Testis (tissue), 5 donors: ENCODE measurements at regions of chr13 and their contacts with region 1.

Region 1: GRCh38 chr13:51452361-51453206 is at the start of gene INTS6:
- DNase-seq: peak; percentile 100
- H3K4me3 ChIP-seq: peak within 1 kb of the TSS; percentile 91 to 98
- H3K27ac ChIP-seq: peak within 1 kb of the TSS; percentile 99 to 100
- H3K4me1 ChIP-seq: peaks cover 13% of the 10 kb centered on the region
- H3K27me3 ChIP-seq: no peaks in the 10 kb centered on the region
- CTCF ChIP-seq: no peak
- POLR2A ChIP-seq: peak; percentile 99
- total RNA-seq, gene INTS6: 97.6 to 132 TPM

Region 2: DNA sequence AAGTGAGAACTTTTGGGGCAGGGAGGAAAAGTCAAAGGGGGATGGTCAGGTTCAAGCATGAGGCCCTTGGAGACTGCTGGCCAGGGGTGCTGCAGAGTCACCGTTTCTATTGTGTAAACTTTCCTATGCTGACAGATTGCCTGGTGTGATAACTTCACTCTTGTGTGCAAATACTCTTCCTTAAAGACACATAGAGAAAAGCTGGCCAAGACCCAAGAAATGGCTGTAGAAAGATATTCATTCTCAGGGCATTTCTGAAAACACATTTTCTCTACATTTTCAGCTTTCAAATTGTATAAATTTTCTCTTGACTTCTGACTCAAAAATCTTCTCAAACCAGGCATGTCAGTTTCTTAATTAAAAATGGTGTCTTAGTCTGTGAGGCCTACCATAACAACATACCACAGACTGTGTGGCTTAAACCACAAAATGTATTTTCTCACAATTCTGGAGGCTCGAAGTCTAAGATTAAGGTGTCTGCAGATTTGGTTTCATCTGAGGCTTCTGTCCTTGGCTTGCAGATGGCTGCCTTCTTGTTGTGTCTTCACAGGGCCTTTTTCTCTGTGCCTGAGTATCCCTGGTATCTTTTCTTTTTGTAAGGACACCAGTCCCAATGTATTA is 1132.8 kb before region 1 on chr13:
- intact Hi-C with region 1: no loop called
- DNase-seq: no peak
- H3K4me3 ChIP-seq: no peak overlapping the region
- H3K27ac ChIP-seq: no peak overlapping the region
- H3K4me1 ChIP-seq: no peaks in the 10 kb centered on the region
- H3K27me3 ChIP-seq: no peaks in the 10 kb centered on the region
- CTCF ChIP-seq: no peak
- POLR2A ChIP-seq: no peak

Region 3: DNA sequence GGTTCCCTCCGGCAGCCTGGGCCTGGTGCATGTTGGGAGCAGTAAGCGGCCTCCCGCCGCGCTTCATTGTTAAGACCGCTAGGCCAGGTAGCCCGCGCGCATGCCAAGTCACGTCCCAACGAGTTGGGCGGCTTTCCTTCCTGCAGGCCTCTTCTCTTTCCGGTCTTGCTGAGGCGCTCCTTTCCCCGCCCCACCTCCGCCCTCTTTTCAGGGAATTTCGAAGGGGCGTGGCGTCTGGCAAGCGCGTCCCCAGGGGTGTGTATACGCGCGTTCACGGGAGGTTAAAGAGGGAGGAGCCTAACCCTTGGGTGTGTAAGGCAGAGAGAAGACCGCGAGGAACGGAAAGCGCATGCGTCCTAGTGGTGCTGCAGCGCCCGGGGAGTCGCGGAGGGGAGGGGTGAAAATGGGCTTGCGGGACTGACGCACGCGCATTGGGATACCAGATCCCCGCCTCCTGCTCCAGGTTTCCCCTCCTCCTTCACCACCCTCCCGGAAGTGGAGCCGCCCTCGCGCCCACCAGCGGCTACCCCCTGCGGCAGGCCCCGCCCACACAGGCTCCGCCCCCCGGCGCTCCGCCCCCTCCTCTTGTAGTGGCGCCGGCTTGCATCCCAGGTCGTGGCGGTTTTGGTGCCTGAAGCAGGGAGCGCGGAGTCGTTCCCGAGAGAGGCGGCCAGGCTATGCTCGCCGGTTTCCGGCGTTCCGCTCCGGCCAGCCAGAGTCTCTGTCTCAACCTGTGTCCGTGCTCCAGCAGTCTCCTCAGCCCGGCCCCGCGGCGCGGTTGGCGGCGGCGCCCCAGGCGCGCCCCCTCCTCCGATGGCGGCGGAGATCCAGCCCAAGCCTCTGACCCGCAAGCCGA is 131.5 kb after region 1 on chr13 and contains the start of gene WDFY2:
- intact Hi-C with region 1: loop called (anchors 10 kb)
- DNase-seq: peak; percentile 100
- H3K4me3 ChIP-seq: peak within 1 kb of the TSS; percentile 81 to 94
- H3K27ac ChIP-seq: peak within 1 kb of the TSS; percentile 89 to 90
- H3K4me1 ChIP-seq: peaks cover 40% of the 10 kb centered on the region
- H3K27me3 ChIP-seq: no peaks in the 10 kb centered on the region
- CTCF ChIP-seq: peak in 1 of 3 experiments; percentile 25
- POLR2A ChIP-seq: peak; percentile 86
- total RNA-seq, gene WDFY2: 36.1 to 45.8 TPM

Region 4: GRCh38 chr13:51803422-51804294 is 351.1 kb after region 1 on chr13 and contains the start of gene DHRS12:
- intact Hi-C with region 1: loop called (anchors 5 kb)
- DNase-seq: peak; percentile 93
- H3K4me3 ChIP-seq: peak within 1 kb of the TSS; percentile 81 to 95
- H3K27ac ChIP-seq: peak within 1 kb of the TSS; percentile 97 to 99
- H3K4me1 ChIP-seq: peaks cover 30% of the 10 kb centered on the region
- H3K27me3 ChIP-seq: no peaks in the 10 kb centered on the region
- CTCF ChIP-seq: no peak
- POLR2A ChIP-seq: peak; percentile 35
- total RNA-seq, gene DHRS12: 11.4 to 16.8 TPM